ENCODE measurements at regions of chr6 and their contacts with region 1.

Region 1: DNA sequence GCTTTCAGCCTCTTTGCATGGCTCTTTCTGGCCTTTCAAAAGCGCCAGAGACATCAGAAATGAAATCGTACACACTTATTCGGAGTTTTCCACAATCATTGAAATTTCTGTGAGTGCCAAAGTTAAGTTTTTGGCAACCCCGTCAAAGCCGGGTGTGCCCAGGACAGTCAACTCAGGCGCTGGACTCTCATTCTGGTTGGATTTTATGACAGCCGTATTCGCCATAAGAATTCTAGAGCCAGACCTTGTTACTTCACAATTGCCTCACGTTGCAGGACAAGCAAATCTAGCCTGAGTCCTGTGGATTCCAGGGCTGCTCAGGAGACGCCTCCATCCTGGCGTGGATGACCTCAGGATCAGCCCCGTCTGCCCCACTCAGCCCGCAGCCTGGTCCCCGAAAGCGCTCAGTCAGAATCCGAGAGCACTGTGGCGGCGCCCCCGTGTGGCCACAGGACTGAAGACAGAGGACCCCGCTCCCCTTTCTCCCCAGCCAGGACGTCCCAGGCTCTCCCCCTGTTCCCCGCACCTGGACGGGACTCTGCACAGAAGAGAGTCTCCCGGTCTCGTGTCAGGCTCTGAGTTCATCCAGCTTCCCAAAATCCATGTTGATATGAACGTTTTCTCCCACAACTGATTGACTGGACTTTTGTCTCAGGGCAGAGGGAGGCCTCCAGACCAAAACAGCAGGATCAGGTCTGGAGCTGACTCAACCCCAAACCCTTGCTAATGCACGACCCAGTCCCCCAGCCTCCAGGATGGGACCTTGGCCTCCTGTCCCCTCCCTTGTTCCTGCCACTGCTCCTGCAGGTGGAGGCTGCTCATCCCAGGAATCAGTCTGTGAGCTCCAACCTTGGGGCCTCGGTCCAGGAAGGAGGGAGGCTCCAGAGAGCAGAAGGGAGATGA is 38.2 kb downstream of the MICA start:
- DNase-seq: peak; percentile 88
- CTCF ChIP-seq: peak; percentile 87

Region 2: DNA sequence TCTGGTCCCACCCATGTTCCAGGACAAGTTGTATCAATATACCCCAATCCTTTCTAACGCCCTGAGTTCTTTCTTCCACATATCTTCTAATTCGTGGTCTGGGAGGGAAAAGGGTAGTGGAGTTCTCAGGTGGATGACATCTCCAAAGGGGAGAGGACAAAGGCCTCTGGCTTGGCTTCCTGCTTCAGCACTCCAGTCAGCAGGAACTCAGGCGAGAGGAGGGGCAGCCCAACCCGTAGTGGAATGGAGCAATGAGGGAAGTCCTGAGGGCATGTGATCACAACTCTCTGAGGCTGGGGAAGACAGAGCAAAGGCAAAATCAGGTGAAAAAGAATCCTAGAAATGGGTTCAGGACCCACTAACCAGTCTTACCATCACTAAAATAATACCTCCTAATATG is 741.3 kb before region 1 on chr6:
- CTCF ChIA-PET with region 1: no interaction called
- POLR2A ChIA-PET with region 1: no interaction called
- DNase-seq: no peak
- CTCF ChIP-seq: no peak

Region 3: DNA sequence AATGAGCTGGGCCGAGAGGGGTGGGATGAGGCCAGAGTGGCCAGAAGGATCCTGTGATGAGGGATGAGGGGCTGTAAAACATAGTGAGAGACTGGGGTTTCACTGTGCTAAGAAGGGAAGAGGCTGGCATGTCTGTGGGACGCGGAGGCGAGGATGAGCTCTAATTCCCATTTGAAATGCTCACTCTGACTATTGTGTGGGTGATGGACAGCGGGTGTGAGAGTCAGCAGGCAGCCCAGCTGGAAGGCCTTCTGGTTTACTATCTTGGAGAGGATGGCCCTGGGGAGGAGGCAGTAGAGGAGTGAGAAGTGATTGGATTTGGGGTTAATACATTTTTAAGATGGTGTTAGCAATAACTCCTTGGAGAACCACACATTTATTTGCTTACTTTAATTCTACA is 47.7 kb before region 1 on chr6:
- CTCF ChIA-PET with region 1: interaction called, 59 read pairs
- POLR2A ChIA-PET with region 1: no interaction called
- DNase-seq: no peak
- CTCF ChIP-seq: no peak

Region 4: DNA sequence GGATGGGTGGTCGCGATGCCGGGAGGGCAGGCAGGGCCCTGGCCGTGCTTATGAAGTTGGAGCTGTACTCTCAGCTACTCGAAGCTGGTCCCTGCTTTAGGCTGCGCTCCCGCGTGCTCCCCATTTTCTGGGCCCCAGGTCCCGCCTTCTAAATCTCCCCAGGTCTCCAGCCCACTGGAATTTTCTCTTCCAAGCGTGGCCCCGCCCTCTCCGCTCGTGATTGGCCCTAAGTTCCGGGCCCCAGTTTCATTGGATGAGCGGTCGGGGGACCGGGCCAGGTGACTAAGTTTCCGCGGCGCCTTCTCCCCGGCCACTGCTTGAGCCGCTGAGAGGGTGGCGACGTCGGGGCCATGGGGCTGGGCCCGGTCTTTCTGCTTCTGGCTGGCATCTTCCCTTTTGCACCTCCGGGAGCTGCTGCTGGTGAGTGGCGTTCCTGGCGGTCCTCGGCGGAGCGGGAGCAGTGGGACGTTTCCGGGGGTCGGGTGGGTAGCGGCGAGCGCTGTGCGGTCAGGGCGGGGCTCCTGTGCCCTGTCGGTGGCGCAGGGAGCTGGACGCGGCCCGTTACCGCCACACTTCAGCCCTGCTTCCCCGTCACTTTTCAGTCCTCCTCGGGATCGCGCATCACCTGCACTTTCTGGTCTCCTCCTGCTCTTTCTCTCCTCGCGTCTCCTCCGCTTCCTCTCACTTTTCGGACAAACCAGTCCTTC is 38.2 kb before region 1 on chr6 and contains the start of gene MICA:
- CTCF ChIA-PET with region 1: interaction called, 59 read pairs
- POLR2A ChIA-PET with region 1: no interaction called
- DNase-seq: peak; percentile 92
- CTCF ChIP-seq: no peak

Region 5: DNA sequence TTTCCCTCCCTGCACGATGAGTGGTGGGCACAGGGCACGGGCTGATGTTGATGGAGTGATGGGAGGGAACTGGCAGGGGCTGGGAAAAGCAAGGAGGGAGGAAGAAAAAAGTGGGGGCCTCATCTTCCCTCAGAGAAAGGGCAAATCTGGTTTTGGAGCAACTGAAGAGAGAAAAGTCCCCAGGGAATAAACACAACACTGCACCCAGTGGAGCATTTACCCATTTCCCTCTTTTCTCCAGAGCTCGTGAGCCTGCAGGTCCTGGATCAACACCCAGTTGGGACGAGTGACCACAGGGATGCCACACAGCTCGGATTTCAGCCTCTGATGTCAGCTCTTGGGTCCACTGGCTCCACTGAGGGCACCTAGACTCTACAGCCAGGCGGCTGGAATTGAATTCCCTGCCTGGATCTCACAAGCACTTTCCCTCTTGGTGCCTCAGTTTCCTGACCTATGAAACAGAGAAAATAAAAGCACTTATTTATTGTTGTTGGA is 26.8 kb before region 1 on chr6:
- CTCF ChIA-PET with region 1: interaction called, 10 read pairs
- POLR2A ChIA-PET with region 1: no interaction called
- DNase-seq: no peak
- CTCF ChIP-seq: no peak

Region 6: GRCh38 chr6:31430449-31430848 is 11.2 kb before region 1 on chr6:
- CTCF ChIA-PET with region 1: interaction called, 14 read pairs
- POLR2A ChIA-PET with region 1: no interaction called
- DNase-seq: no peak
- CTCF ChIP-seq: no peak

Region 7: GRCh38 chr6:31453259-31453658 is 11.6 kb after region 1 on chr6:
- CTCF ChIA-PET with region 1: interaction called, 13 read pairs
- POLR2A ChIA-PET with region 1: no interaction called
- DNase-seq: no peak
- CTCF ChIP-seq: no peak